A673 (cell line): ENCODE measurements at regions of chr2 and their contacts with region 1.

Region 1: DNA sequence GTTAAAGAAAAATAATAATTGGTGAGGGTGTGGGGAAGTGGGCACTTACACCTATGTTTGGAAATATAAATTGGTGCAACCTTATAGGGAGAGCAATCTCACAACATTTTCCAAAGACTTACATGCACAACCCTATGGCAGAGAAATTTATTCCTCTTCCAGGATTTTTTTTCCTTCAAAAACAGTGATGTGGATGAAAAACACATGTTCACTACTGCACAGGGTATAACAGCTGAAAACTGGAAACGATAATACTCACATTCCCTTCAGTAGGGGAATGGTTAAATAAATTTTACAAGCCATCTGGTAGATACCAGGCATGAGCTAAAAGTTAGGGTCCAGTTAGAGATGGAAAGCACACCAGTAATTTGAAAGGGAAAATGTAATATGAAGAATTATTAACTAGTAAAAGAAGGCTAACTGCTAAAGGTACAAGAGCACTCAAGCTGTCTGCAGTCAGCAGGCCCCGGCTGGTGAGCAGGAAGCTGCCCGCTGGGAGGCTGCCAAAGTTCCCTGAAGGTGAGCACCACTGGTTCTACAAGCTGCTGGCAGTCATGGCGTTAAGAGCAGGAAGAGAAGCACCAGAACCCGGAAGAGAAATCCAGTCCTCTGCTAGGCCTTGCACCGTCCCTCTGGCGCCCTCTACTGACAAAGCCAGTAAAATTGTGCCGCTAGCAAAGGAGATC is 28.4 kb upstream of the CASP8 start:
- DNase-seq: peak; percentile 95
- H3K4me3 ChIP-seq: no peak overlapping the region
- H3K27ac ChIP-seq: no peak overlapping the region
- H3K4me1 ChIP-seq: peaks cover 20% of the 10 kb centered on the region
- H3K27me3 ChIP-seq: no peaks in the 10 kb centered on the region
- CTCF ChIP-seq: peak; percentile 93

Region 2: GRCh38 chr2:200901459-200902072 is 330.4 kb before region 1 on chr2:
- CTCF ChIA-PET with region 1: interaction called, 14 read pairs
- POLR2A ChIA-PET with region 1: no interaction called
- intact Hi-C with region 1: loop called (anchors 2 kb)
- DNase-seq: peak; percentile 92
- H3K4me3 ChIP-seq: no peak overlapping the region
- H3K27ac ChIP-seq: no peak overlapping the region
- H3K4me1 ChIP-seq: no peaks in the 10 kb centered on the region
- H3K27me3 ChIP-seq: no peaks in the 10 kb centered on the region
- CTCF ChIP-seq: peak; percentile 72

Region 3: GRCh38 chr2:201182650-201183364 is 49.1 kb before region 1 on chr2 and contains the start of gene CASP10:
- CTCF ChIA-PET with region 1: interaction called, 9 read pairs
- POLR2A ChIA-PET with region 1: no interaction called
- intact Hi-C with region 1: loop called (anchors 5 kb)
- DNase-seq: peak; percentile 57
- H3K4me3 ChIP-seq: peak within 1 kb of the TSS; percentile 20
- H3K27ac ChIP-seq: no peak within 1 kb of the TSS
- H3K4me1 ChIP-seq: no peaks in the 10 kb centered on the region
- H3K27me3 ChIP-seq: no peaks in the 10 kb centered on the region
- CTCF ChIP-seq: peak; percentile 37; the same call in 1 of the 2 replicates
- total RNA-seq, gene CASP10: 0.85 and 1.2 TPM in 2 replicates

Region 4: DNA sequence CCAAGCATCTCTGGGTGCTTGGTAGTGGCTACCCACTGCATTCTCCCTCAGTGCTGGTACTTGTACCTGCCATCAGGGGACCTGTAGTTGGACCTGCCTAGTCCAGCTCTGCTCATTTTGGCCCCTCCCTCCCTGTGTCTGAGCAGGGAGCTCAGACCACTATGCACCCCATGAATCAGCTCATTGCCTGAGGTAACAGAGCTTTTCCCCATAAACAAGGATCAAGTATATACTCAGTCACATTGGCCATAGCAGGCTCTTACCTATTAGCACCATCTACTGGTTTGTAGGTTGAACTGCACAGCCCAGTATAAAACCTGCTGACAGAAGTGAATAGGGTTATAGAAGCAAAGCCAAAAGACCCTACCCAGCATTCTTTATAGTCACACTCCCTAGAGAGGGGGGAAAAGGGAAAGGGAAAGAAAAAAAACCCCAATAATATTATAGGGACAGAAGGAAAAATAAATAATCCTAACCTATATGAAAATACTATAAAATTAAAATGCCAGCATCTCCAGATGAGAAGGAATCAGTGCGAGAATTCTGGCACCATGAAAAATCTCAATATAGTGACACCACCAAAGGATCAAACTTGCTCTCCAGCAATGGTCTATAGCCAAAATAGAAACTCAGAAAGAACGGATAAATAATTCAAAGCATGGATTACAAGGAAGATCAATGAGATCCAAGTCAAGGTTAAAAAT is 132.1 kb after region 1 on chr2:
- CTCF ChIA-PET with region 1: interaction called, 6 read pairs
- POLR2A ChIA-PET with region 1: no interaction called
- intact Hi-C with region 1: loop called (anchors 1 kb)
- DNase-seq: peak; percentile 72
- H3K4me3 ChIP-seq: no peak overlapping the region
- H3K27ac ChIP-seq: no peak overlapping the region
- H3K4me1 ChIP-seq: no peaks in the 10 kb centered on the region
- H3K27me3 ChIP-seq: no peaks in the 10 kb centered on the region
- CTCF ChIP-seq: peak; percentile 91

Region 5: DNA sequence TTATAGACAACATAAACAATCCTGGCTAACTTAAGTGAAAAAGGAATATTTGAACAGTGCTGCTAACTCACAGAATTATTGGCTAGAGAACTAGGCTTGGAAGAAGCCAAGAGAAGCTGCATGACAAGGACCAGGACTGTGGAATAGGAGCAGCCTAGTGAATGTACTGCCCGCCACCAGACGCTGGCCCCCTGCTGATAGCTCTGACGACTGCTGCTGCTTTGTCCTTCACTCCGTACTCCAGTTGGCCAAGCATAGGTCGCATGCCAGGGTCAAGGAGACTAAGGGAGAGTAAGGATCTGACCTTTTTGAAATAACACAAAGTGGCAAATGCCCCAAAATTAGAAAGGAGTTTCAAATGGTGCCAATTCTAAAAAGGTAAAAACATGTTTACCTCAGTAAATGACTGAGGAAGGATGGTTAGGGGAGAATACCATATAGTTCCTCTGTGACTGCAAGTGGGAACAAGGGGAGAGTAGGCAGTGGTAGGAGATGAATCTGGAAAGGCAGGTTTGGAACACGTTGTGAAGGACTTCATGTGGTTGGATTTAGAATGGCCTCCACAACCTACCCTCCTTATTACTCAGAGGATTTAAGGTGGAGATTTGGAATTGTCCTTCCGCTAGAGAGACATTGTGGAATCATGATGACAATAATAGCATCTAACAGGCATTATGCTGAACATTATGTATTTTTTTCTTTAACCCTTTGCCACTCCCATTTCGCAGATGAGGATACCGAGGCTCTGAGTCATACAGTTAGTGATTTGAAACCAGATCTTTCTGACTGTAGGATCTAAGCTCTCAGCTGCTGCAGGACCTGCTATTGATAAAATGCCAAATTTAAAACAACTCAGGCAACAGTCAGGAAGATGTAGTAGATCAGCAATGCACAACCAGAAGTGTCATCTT is 239.2 kb after region 1 on chr2:
- CTCF ChIA-PET with region 1: no interaction called
- POLR2A ChIA-PET with region 1: no interaction called
- intact Hi-C with region 1: no loop called
- DNase-seq: no peak
- H3K4me3 ChIP-seq: no peak overlapping the region
- H3K27ac ChIP-seq: no peak overlapping the region
- H3K4me1 ChIP-seq: peaks cover 8% of the 10 kb centered on the region
- H3K27me3 ChIP-seq: no peaks in the 10 kb centered on the region
- CTCF ChIP-seq: no peak

Region 6: GRCh38 chr2:201642579-201643215 is 410.8 kb after region 1 on chr2:
- CTCF ChIA-PET with region 1: no interaction called
- POLR2A ChIA-PET with region 1: no interaction called
- intact Hi-C with region 1: loop called (anchors 10 kb)
- DNase-seq: peak; percentile 88
- H3K4me3 ChIP-seq: peak overlapping the region; percentile 83
- H3K27ac ChIP-seq: peak overlapping the region; percentile 84
- H3K4me1 ChIP-seq: peaks cover 16% of the 10 kb centered on the region
- H3K27me3 ChIP-seq: no peaks in the 10 kb centered on the region
- CTCF ChIP-seq: no peak

Region 7: GRCh38 chr2:202178342-202178958 is 946.5 kb after region 1 on chr2:
- CTCF ChIA-PET with region 1: no interaction called
- POLR2A ChIA-PET with region 1: no interaction called
- intact Hi-C with region 1: loop called (anchors 5 kb)
- DNase-seq: peak; percentile 83
- H3K4me3 ChIP-seq: no peak overlapping the region
- H3K27ac ChIP-seq: no peak overlapping the region
- H3K4me1 ChIP-seq: no peaks in the 10 kb centered on the region
- H3K27me3 ChIP-seq: no peaks in the 10 kb centered on the region
- CTCF ChIP-seq: peak; percentile 89